CD8-positive, alpha-beta T cell (primary cell): ENCODE measurements at regions of chr19 and their contacts with region 1.

Region 1: DNA sequence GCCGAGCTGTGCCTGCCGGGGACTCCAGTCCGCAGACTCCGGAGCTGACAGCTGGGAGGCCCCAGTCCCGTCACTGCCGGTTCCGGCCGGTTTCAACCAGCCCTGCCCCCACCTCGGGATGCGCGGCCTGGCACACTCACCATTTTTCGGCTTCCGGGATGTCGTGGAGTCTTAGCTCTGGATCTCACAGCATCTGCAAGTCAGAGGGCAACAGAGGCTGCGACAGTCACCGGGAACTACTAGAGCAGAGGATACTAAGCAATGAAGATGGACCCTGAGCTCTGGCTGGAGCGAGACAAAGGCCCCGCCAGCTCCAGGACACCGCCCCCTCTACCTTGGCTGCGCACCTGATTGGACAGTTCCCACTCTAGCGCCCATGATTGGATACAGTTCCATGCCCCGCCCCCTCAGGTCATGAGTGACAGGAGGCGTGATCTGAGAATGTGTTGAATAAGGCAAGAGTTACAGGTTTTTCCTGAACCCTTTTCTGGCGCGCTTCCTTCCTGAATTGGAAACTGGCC is at the start of gene ZNF682:
- DNase-seq: peak; percentile 87 to 97 (median 95)
- ATAC-seq: peak; percentile 99
- H3K4me3 ChIP-seq: peak within 1 kb of the TSS; percentile 71 to 72
- H3K4me3 Mint-ChIP-seq: peak within 1 kb of the TSS; percentile 98
- H3K27ac ChIP-seq: peak within 1 kb of the TSS; percentile 60 to 68
- H3K27ac Mint-ChIP-seq: peak within 1 kb of the TSS; percentile 96
- H3K4me1 ChIP-seq: peaks cover 13% of the 10 kb centered on the region
- H3K4me1 Mint-ChIP-seq: peaks cover 20% of the 10 kb centered on the region
- H3K27me3 ChIP-seq: no peaks in the 10 kb centered on the region
- H3K27me3 Mint-ChIP-seq: peaks cover 2% of the 10 kb centered on the region
- CTCF ChIP-seq: no peak
- total RNA-seq, gene ZNF682: 13.3 to 16.0 TPM

Region 2: DNA sequence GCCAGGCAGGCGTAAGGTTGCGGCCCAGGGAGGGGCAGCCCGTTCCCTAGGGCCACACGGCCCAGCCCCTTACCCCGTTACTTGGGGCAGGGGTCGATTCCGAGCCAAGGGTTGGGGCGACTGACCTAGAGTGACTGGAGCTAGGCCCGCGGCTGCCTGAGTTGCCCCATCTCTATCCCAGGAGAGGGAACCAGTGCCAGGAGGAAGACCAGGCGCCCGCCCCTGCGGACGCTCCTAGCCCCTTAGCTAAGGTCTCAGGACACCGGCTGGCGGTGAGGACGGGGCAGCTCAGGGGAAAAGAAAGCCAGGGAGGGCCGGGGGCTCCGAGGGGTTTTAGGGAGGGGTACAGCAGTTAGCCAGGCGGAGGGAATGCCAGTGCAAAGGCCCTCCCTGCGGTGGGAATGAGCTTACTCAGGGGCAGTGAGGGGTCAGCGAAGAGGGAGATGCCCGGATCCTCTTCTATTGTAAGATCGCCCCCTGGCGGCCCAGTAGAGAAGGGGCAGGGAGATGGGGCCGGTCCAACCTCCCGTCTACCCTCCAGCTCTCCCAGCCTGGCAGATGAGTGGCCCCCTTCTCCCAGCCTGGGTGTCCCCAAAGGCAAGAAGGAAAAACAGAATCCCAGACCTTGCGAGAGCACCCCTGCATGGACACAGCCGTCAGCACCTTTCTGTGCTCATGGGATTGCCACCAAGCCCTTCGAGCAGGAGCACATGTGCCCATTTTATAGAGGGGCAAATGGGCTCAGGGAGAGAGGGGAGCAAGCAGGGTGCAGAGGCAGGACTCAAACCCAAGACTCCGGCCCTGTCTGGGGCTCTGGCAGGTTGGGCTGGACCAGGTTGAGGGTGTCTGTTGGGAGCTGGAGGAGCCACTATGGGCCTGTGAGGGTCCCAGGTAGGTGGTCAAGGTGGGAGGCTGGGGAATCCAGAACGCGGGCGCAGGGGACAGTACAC is 484.9 kb before region 1 on chr19:
- CTCF ChIA-PET with region 1: no interaction called
- POLR2A ChIA-PET with region 1: no interaction called
- intact Hi-C with region 1: loop called in 1 of 2 experiments (anchors 10 kb)
- DNase-seq: peak in 7 of 9 experiments; percentile 45 to 76 (median 64)
- ATAC-seq: peak; percentile 60
- H3K4me3 ChIP-seq: no peak overlapping the region
- H3K4me3 Mint-ChIP-seq: no peak overlapping the region
- H3K27ac ChIP-seq: no peak overlapping the region
- H3K27ac Mint-ChIP-seq: no peak overlapping the region
- H3K4me1 ChIP-seq: no peaks in the 10 kb centered on the region
- H3K4me1 Mint-ChIP-seq: peaks cover 4% of the 10 kb centered on the region
- H3K27me3 ChIP-seq: no peaks in the 10 kb centered on the region
- H3K27me3 Mint-ChIP-seq: peaks cover 5% of the 10 kb centered on the region
- CTCF ChIP-seq: peak; percentile 84

Region 3: GRCh38 chr19:20051841-20052768 is 12.8 kb after region 1 on chr19:
- CTCF ChIA-PET with region 1: no interaction called
- POLR2A ChIA-PET with region 1: interaction called, 26 read pairs
- intact Hi-C with region 1: loop called (anchors 1 kb)
- DNase-seq: peak; percentile 10 to 78 (median 56)
- ATAC-seq: peak; percentile 93
- H3K4me3 ChIP-seq: peak overlapping the region; percentile 80 to 87
- H3K4me3 Mint-ChIP-seq: peak overlapping the region; percentile 99
- H3K27ac ChIP-seq: peak overlapping the region; percentile 37 to 72
- H3K27ac Mint-ChIP-seq: peak overlapping the region; percentile 91
- H3K4me1 ChIP-seq: peaks cover 6% of the 10 kb centered on the region
- H3K4me1 Mint-ChIP-seq: peaks cover 13% of the 10 kb centered on the region
- H3K27me3 ChIP-seq: peaks cover 0 to 2% of the 10 kb centered on the region in 2 experiments
- H3K27me3 Mint-ChIP-seq: peaks cover 3% of the 10 kb centered on the region
- CTCF ChIP-seq: no peak

Region 4: GRCh38 chr19:20167020-20167644 is 127.9 kb after region 1 on chr19 and contains the start of gene ZNF486:
- CTCF ChIA-PET with region 1: interaction called, 3 read pairs
- POLR2A ChIA-PET with region 1: interaction called, 7 read pairs
- intact Hi-C with region 1: loop called (anchors 1 to 2 kb)
- DNase-seq: peak; percentile 83 to 97 (median 92)
- ATAC-seq: peak; percentile 97
- H3K4me3 ChIP-seq: peak within 1 kb of the TSS; percentile 74 to 95
- H3K4me3 Mint-ChIP-seq: peak within 1 kb of the TSS; percentile 97
- H3K27ac ChIP-seq: peak within 1 kb of the TSS; percentile 54 to 80
- H3K27ac Mint-ChIP-seq: peak within 1 kb of the TSS; percentile 92
- H3K4me1 ChIP-seq: peaks cover 13% of the 10 kb centered on the region
- H3K4me1 Mint-ChIP-seq: peaks cover 57% of the 10 kb centered on the region
- H3K27me3 ChIP-seq: no peaks in the 10 kb centered on the region
- H3K27me3 Mint-ChIP-seq: no peaks in the 10 kb centered on the region
- CTCF ChIP-seq: no peak
- total RNA-seq, gene ZNF486: 3.7 to 4.7 TPM

Region 5: DNA sequence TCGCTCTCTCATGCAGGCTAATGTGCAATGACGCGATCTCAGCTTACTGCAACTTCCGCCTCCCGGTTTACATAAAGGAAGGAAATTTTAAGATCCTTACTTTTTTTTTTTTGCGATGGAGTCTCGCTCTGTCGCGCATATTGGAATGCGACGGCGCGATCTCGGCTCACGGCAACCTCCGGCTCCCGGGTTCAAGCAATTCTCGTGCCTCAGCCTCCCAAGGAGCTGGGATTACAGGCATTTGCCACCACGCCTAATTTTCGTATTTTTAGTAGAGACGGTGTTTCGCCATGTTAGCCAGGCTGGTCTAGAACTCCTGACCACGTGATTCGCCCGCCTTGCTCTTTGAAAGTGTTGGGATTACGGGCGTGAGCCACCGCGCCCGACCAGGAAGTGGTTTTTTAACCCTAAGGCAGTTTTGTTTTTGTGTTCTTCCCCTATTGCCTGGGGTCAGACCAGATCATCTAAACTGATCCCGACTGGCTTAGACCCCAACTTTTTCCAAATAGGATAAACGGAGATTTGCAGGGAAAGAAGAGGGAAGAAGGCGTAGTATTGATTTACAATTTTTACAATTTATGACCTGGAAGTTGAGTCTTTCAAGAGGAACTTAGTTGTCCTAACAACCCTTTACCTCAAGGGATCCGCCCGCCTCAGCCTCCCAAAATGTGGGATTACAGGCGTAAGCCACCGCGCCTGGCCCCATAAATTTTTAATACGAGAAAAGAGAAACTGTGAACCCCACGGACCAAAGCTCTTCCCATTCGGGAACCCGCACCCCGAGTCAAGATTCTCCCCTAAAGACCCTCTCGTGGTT is 384.3 kb after region 1 on chr19:
- CTCF ChIA-PET with region 1: no interaction called
- POLR2A ChIA-PET with region 1: no interaction called
- intact Hi-C with region 1: loop called in 1 of 2 experiments (anchors 1 kb)
- DNase-seq: peak in 7 of 9 experiments; percentile 4 to 62 (median 28)
- ATAC-seq: no peak
- H3K4me3 ChIP-seq: peak overlapping the region; percentile 52 to 88
- H3K4me3 Mint-ChIP-seq: peak overlapping the region; percentile 97
- H3K27ac ChIP-seq: peak overlapping the region; percentile 11 to 53
- H3K27ac Mint-ChIP-seq: peak overlapping the region; percentile 93
- H3K4me1 ChIP-seq: no peaks in the 10 kb centered on the region
- H3K4me1 Mint-ChIP-seq: peaks cover 8% of the 10 kb centered on the region
- H3K27me3 ChIP-seq: no peaks in the 10 kb centered on the region
- H3K27me3 Mint-ChIP-seq: no peaks in the 10 kb centered on the region
- CTCF ChIP-seq: no peak

Region 6: DNA sequence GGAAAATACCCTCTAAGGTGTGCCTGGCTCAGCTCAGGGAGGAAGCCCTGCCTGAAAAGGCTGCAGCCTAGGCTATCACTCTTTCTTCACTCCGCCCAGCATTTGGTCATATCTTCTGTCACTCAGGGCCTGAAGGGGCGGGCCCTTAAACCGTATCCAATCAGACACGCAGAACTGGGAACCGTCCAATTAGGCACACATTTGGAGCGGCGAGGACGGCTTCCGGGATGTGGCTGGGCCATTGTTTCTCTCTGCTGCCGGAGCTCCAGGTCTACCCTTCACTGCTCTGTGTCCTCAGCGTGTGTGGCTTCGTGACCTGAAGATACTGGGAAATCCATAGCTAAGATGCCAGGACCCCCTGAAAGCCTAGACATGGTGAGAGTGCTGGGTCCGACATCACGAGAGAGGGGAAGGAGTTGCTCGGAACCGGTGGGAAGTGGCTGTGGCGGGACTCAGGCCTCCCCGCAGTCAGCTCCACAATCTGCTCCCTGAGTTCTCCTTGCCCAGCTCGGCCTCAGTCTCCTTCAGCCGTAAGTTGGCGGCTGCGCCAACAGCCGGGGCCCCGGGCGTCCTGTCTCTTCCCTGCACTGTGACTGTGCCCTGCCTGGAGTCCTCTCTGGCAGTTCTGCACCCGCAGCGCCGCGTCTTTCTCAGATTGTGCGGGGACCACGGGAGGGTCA is 1357.8 kb after region 1 on chr19 and contains the start of gene ZNF493:
- CTCF ChIA-PET with region 1: no interaction called
- POLR2A ChIA-PET with region 1: no interaction called
- intact Hi-C with region 1: loop called in 1 of 2 experiments (anchors 1 kb)
- DNase-seq: peak; percentile 82 to 96 (median 92)
- ATAC-seq: peak; percentile 99
- H3K4me3 ChIP-seq: peak within 1 kb of the TSS; percentile 73 to 95
- H3K4me3 Mint-ChIP-seq: peak within 1 kb of the TSS; percentile 97
- H3K27ac ChIP-seq: peak within 1 kb of the TSS; percentile 72 to 76
- H3K27ac Mint-ChIP-seq: peak within 1 kb of the TSS; percentile 94
- H3K4me1 ChIP-seq: peaks cover 15% of the 10 kb centered on the region
- H3K4me1 Mint-ChIP-seq: peaks cover 38% of the 10 kb centered on the region
- H3K27me3 ChIP-seq: no peaks in the 10 kb centered on the region
- H3K27me3 Mint-ChIP-seq: no peaks in the 10 kb centered on the region
- CTCF ChIP-seq: no peak
- total RNA-seq, gene ZNF493: 44.6 to 46.1 TPM